ENCODE measurements at regions of chr2 and their contacts with region 1.

Region 1: GRCh38 chr2:43402452-43402944 is 176.1 kb upstream of the ZFP36L2 start:
- DNase-seq: no peak
- H3K4me3 ChIP-seq: no peak overlapping the region
- H3K27ac ChIP-seq: peak overlapping the region in 2 of 4 donors; percentile 40 to 84
- H3K4me1 ChIP-seq: peaks cover 0 to 84% (median 39%) of the 10 kb centered on the region in 4 donors
- H3K27me3 ChIP-seq: no peaks in the 10 kb centered on the region
- CTCF ChIP-seq: no peak
- EP300 ChIP-seq: no peak
- POLR2A ChIP-seq: no peak

Region 2: DNA sequence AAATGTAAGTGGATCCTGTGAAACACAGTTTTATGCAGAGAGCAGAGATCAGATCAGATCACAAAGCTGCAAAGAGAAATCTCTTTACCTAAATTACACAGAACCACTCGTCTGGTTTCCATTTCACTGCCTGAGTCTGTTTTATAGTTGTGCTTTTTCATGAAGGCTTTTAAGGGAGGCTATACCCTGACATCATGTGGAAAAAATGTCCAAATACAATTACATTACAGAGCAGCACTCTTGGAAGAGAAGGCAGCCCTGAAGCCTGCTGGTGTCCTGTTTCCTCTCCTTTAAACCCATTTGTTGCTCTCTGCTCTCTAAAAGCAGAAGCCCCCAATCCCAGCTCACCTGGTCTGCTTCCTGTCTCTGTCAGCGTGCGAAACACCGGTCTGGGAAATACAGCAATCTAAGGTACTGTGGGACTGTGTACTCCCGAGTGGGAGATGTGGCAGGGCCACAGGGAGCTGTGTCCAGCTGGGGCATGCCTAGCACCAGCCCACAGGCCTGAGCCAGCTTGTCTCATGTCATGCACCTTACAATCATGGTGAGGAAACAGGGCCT is 151.2 kb before region 1 on chr2:
- intact Hi-C with region 1: loop called (anchors 2 kb)
- DNase-seq: no peak
- H3K4me3 ChIP-seq: no peak overlapping the region
- H3K27ac ChIP-seq: peak overlapping the region; percentile 84 to 93 (median 88)
- H3K4me1 ChIP-seq: peaks cover 0 to 44% (median 31%) of the 10 kb centered on the region in 4 donors
- H3K27me3 ChIP-seq: no peaks in the 10 kb centered on the region
- CTCF ChIP-seq: no peak
- EP300 ChIP-seq: no peak
- POLR2A ChIP-seq: no peak

Region 3: GRCh38 chr2:43467891-43468290 is 65.4 kb after region 1 on chr2:
- intact Hi-C with region 1: loop called (anchors 5 kb)
- DNase-seq: no peak
- H3K4me3 ChIP-seq: no peak overlapping the region
- H3K27ac ChIP-seq: peak overlapping the region; percentile 51 to 76 (median 64)
- H3K4me1 ChIP-seq: peaks cover 0 to 63% (median 49%) of the 10 kb centered on the region in 4 donors
- H3K27me3 ChIP-seq: no peaks in the 10 kb centered on the region
- CTCF ChIP-seq: no peak
- EP300 ChIP-seq: no peak
- POLR2A ChIP-seq: no peak

Measured in sigmoid colon (tissue), 7 donors.